Activated naive CD8-positive, alpha-beta T cell treated with anti-CD3 and anti-CD28 coated beads, Interleukin-2, amount 10 ng/mL, durations not matched to agents 7 days and 5 days (primary cell): ENCODE measurements at regions of chr6 and their contacts with region 1.

Region 1: DNA sequence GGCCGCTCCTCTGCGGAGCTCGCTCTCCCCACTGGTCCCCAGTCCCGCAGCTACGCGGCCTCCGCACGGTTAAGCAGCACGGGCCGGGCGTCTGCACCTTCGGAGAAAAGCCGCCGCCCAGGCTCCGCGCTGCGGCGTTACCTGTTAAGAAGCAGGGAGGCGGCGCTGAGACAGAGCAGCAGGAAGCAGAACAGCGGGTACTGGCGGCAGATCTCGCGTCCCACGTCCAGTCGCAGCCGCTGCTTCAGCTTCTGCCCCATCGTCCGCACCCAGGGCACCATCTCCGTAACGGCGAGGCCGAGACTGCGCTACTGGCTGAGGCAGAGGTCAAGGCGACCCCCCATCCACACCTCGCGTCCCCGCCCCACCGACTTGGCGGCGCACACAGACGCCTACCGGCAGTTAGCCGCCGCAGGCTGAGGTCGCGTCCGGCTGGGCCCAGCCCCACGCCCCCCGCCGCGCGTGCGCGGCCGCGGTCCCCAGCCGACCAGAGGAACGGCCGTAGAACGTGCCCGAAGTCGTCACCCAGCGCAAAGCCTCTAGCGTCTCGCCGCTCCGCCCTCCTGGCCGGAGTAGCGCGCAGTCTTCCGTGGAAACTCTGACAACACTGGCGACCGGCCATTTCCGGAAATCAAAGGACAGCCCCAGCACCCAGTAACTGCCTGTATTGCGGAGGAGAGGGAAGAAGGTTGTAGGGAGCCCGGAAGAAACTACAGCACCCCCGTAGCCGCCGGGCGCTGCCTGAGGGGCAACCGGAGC is at the start of gene SNX14:
- DNase-seq: peak; percentile 81
- ATAC-seq: peak; percentile 85
- H3K4me3 Mint-ChIP-seq: peak within 1 kb of the TSS; percentile 95
- H3K27ac Mint-ChIP-seq: peak within 1 kb of the TSS; percentile 96
- H3K4me1 Mint-ChIP-seq: peaks cover 25% of the 10 kb centered on the region
- H3K27me3 Mint-ChIP-seq: peaks cover 2% of the 10 kb centered on the region
- total RNA-seq, gene SNX14: 55.6 to 67.5 TPM

Region 2: DNA sequence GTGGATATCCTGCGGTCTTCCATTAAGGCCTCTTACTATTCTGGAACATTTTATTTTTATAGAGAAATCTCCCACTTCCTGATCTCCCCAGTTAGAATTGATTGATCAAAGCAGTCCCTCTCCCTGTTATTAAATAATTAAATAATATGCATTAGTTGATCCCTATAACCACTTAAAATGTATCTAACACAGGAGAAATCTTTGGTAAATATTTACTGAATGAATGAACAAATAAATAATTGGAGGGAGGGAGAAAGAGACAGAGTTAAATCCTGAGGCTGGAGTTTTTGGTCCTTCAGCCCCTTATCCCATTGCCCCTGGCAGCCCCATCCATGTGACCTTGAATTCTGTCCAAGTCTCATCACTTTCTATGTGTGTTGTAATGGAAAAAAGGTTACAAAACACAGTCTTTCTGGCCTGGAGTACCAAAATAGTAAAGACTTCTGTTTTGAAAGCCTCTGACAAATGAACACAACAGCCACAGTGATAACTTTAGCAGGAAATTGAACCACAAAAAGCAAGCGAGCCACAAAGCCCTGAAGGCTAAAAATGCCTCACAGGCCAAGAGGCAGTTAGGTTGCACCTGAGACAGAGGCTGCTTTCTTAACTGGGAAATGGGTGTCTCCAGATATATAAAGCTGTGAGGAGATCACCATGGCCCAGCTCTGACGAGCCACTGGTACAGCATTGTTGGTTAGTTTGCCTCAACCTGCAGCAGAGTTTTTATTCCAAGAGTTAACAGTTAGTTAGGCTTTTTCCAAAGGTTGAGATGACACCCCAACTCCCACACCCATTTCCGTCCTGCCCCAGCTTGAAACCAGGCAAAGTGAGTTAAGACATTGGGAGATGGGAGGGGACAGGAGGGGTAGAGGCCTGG is 132.5 kb before region 1 on chr6:
- POLR2A ChIA-PET with region 1: no interaction called
- DNase-seq: peak; percentile 47
- ATAC-seq: peak; percentile 78
- H3K4me3 Mint-ChIP-seq: peak overlapping the region; percentile 54
- H3K27ac Mint-ChIP-seq: peak overlapping the region; percentile 92
- H3K4me1 Mint-ChIP-seq: peaks cover 78% of the 10 kb centered on the region
- H3K27me3 Mint-ChIP-seq: no peaks in the 10 kb centered on the region

Region 3: DNA sequence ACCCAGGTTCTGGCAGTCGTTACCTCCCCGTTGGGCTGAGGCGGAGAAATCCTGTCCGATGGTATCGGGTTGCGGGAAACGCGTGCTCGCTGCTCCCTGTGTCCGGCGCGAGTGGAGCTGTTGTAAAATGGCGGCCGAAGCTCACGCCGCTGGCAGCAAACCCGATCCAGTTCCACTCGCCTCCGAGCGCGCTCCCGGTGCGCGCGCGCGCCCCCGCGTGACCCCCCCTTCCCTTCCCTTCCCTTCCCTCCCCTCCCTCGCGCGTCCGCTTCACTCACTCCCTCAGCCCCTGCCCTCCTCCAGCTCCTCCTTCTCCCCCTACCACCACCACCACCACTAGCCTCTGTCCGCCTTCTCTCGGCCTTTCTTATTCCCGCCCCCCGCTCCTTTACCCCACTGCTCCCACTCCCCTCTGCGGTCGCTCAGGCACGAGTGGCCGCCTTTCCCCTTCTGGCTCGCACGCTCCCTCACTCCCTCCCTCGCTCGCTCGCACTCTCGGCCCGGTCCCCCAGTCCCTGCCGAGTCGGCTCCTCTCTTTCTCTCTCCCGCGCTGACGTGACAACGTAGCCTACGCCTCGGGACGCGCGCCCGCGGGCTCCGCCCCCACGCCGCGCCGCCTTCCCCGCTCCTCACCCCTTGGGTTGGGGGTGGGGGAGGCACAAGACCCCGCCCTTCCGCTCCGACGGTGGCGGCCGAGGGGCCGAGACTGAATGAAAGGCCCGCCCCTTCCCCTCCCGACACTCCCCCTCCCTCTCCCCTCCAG is 49.3 kb after region 1 on chr6 and contains the start of gene SYNCRIP:
- POLR2A ChIA-PET with region 1: interaction called, 64 read pairs
- DNase-seq: peak; percentile 99
- ATAC-seq: peak; percentile 84
- H3K4me3 Mint-ChIP-seq: peak within 1 kb of the TSS; percentile 97
- H3K27ac Mint-ChIP-seq: peak within 1 kb of the TSS; percentile 100
- H3K4me1 Mint-ChIP-seq: peaks cover 39% of the 10 kb centered on the region
- H3K27me3 Mint-ChIP-seq: peaks cover 3% of the 10 kb centered on the region
- total RNA-seq, gene SYNCRIP: 94.4 to 99.3 TPM

Region 4: DNA sequence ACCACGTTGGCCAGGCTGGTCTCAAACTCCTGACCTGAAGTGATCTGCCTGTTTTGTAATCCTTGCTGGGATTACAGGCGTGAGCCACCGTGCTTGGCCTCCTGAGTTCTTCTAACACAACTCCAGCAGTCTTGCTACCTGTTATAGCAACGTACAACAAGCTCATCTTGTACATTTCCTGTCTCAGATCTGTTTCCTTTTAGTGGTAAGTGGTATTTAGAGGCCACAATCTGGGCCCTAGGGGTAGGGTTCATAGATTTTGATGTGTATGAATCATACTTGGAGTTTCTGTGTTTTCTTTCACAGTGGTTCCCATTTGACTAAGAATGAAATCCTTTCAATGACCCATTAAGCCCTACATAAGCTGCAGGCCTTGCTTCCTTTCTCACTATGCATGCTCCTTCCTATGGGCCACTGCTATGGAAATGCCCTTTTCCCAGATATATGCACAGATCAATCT is 76.1 kb after region 1 on chr6:
- POLR2A ChIA-PET with region 1: interaction called, 13 read pairs
- DNase-seq: peak; percentile 45
- ATAC-seq: peak; percentile 94
- H3K4me3 Mint-ChIP-seq: peak overlapping the region; percentile 63
- H3K27ac Mint-ChIP-seq: peak overlapping the region; percentile 90
- H3K4me1 Mint-ChIP-seq: peaks cover 50% of the 10 kb centered on the region
- H3K27me3 Mint-ChIP-seq: no peaks in the 10 kb centered on the region